ENCODE measurements at regions of chr11 and their contacts with region 1.

Region 1: DNA sequence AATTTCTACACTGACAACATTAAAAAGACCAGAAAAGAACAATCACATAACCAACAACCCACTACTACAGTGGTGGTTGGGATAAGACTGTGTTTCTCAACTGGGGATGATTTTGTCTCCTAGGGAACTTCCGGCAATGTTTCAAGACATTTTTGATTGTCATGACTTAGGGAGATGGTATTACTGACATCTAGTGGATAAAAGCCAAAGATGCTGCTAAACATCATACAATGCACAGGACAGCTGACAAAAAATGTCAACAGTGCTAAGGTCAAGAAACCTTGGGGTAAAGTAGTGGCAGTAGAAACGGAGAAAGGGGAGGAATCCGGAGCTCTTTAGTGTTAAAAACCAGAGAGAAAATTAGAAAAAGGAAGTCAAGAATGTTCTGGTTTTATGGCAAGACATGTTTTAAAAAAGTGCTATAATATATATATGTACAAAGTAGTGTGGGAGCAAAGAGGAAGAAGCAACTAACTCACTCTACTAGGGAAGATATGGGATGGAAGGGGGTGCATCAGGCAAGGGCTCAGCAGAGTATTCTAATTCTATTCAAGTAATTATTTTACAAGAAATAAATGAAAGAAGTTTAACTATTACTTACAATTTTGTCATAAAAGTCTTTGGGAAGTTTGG is 37.2 kb downstream of the CKAP5 start:
- DNase-seq: peak; percentile 6
- H3K4me3 Mint-ChIP-seq: no peak overlapping the region
- H3K27ac Mint-ChIP-seq: no peak overlapping the region
- H3K4me1 Mint-ChIP-seq: peaks cover 17% of the 10 kb centered on the region
- H3K27me3 Mint-ChIP-seq: no peaks in the 10 kb centered on the region

Region 2: GRCh38 chr11:45161252-45162063 is 1647.5 kb before region 1 on chr11:
- CTCF ChIA-PET with region 1: no interaction called
- POLR2A ChIA-PET with region 1: interaction called, 10 read pairs
- DNase-seq: no peak
- H3K4me3 Mint-ChIP-seq: no peak overlapping the region
- H3K27ac Mint-ChIP-seq: no peak overlapping the region
- H3K4me1 Mint-ChIP-seq: no peaks in the 10 kb centered on the region
- H3K27me3 Mint-ChIP-seq: no peaks in the 10 kb centered on the region

Region 3: GRCh38 chr11:46710821-46711269 is 98.1 kb before region 1 on chr11:
- CTCF ChIA-PET with region 1: no interaction called
- POLR2A ChIA-PET with region 1: no interaction called
- DNase-seq: no peak
- H3K4me3 Mint-ChIP-seq: no peak overlapping the region
- H3K27ac Mint-ChIP-seq: no peak overlapping the region
- H3K4me1 Mint-ChIP-seq: no peaks in the 10 kb centered on the region
- H3K27me3 Mint-ChIP-seq: no peaks in the 10 kb centered on the region

Region 4: GRCh38 chr11:46724088-46724487 is 84.8 kb before region 1 on chr11:
- CTCF ChIA-PET with region 1: no interaction called
- POLR2A ChIA-PET with region 1: no interaction called
- DNase-seq: no peak
- H3K4me3 Mint-ChIP-seq: no peak overlapping the region
- H3K27ac Mint-ChIP-seq: no peak overlapping the region
- H3K4me1 Mint-ChIP-seq: no peaks in the 10 kb centered on the region
- H3K27me3 Mint-ChIP-seq: no peaks in the 10 kb centered on the region

Region 5: GRCh38 chr11:46845740-46846509 is 37.0 kb after region 1 on chr11 and contains the start of gene CKAP5:
- CTCF ChIA-PET with region 1: no interaction called
- POLR2A ChIA-PET with region 1: interaction called, 17 read pairs
- DNase-seq: peak; percentile 90
- H3K4me3 Mint-ChIP-seq: peak within 1 kb of the TSS; percentile 90
- H3K27ac Mint-ChIP-seq: peak within 1 kb of the TSS; percentile 98
- H3K4me1 Mint-ChIP-seq: peaks cover 43% of the 10 kb centered on the region
- H3K27me3 Mint-ChIP-seq: no peaks in the 10 kb centered on the region
- total RNA-seq, gene CKAP5: 171 to 189 TPM